HEK293T (cell line): ENCODE measurements at regions of chr12 and their contacts with region 1.

Region 1: GRCh38 chr12:58540480-58541299 is 379.6 kb downstream of the LRIG3 start:
- DNase-seq: peak; percentile 73

Region 2: GRCh38 chr12:58313091-58313855 is 227.4 kb before region 1 on chr12:
- CTCF ChIA-PET with region 1: no interaction called
- POLR2A ChIA-PET with region 1: no interaction called
- DNase-seq: no peak

Region 3: GRCh38 chr12:59149997-59150642 is 609.4 kb after region 1 on chr12:
- CTCF ChIA-PET with region 1: interaction called, 12 read pairs
- POLR2A ChIA-PET with region 1: no interaction called
- DNase-seq: peak; percentile 60